ENCODE measurements at regions of chr22 and their contacts with region 1.

Region 1: DNA sequence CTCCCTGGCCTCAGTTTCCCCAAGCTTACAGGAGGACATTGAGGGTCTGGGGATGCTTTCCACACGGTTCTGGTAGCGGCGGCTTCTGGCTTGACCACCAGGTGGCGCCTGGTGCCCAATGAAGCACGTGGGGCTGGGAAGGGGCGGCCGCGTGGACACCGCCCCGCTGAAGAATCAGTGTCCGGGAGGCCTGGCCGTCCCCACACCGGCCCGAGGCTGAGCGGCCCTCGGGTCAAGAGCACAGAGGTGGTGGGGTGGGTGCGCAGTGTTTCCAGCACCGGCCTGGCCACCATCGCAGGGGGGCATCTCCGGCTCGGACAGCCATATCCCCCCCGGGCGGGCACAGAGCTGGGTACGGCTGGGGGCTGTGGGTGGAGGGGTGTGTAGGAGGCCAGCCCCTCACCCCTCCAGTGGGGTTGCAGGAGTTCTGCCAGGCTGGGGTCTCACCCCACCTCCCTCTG is 27.8 kb upstream of the PPARA start:
- DNase-seq: peak; percentile 71 to 83
- ATAC-seq: peak; percentile 58 to 79 (median 70)
- H3K4me3 ChIP-seq: peak overlapping the region in 1 of 10 donors; percentile 16
- H3K27ac ChIP-seq: no peak overlapping the region
- H3K4me1 ChIP-seq: peaks cover 0 to 23% (median 5%) of the 10 kb centered on the region in 9 donors
- H3K27me3 ChIP-seq: no peaks in the 10 kb centered on the region
- CTCF ChIP-seq: peak; percentile 93 to 99 (median 96)

Region 2: DNA sequence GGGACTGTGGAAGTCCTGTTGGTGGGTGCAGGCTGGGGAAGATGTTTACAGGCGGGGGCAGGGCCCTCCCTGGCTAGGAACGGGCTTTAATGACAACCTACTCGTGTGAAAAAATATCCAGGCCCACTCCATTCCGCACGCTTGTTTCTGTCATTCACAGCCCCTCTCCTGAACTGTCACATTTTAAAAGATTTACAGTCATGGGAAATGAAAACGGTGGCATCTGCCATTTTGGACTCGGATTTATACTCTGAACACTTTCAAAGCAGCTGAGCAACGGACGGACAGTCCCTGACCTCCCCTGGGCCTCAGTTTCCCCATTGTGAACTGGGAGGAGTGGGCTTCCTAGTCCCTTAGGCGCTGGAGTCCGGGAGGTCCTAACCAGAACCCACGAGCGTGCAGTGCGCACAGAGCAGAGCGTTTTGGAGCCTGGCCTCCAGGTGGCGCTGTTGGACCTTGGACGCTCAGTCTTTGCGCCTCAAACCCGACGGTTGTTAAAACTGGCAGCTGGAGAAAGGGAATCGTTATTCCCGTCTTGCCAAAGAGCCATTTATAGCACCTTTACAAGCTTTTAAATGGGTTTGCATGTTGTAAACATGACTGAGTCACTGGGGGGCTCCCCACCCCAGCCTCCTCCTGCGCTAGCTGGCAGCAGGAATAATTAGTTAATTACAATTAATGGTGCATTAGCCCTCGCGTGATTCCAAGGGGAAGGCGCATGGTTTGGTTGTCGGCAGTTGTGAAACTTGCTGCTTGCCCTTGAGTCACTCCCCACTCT is 544.6 kb before region 1 on chr22:
- intact Hi-C with region 1: loop called in 1 of 10 experiments (anchors 10 kb)
- DNase-seq: peak; percentile 71 to 86
- ATAC-seq: peak; percentile 69 to 87 (median 80)
- H3K4me3 ChIP-seq: no peak overlapping the region
- H3K27ac ChIP-seq: no peak overlapping the region
- H3K4me1 ChIP-seq: peaks cover 0 to 6% (median 0%) of the 10 kb centered on the region in 9 donors
- H3K27me3 ChIP-seq: peaks cover 0 to 42% (median 26%) of the 10 kb centered on the region in 7 donors
- CTCF ChIP-seq: peak; percentile 79 to 97 (median 92)

Region 3: GRCh38 chr22:46250035-46250782 is 127.7 kb after region 1 on chr22 and contains the start of gene CDPF1:
- intact Hi-C with region 1: loop called in 1 of 10 experiments (anchors 10 kb)
- DNase-seq: peak; percentile 93 to 94
- ATAC-seq: peak; percentile 92 to 97 (median 94)
- H3K4me3 ChIP-seq: peak within 1 kb of the TSS; percentile 48 to 93 (median 81)
- H3K27ac ChIP-seq: peak within 1 kb of the TSS; percentile 84 to 96 (median 94)
- H3K4me1 ChIP-seq: peaks cover 13 to 58% (median 43%) of the 10 kb centered on the region in 9 donors
- H3K27me3 ChIP-seq: no peaks in the 10 kb centered on the region
- CTCF ChIP-seq: no peak
- total RNA-seq, gene CDPF1: 6.3 to 10.4 (median 7.5) TPM

Region 4: DNA sequence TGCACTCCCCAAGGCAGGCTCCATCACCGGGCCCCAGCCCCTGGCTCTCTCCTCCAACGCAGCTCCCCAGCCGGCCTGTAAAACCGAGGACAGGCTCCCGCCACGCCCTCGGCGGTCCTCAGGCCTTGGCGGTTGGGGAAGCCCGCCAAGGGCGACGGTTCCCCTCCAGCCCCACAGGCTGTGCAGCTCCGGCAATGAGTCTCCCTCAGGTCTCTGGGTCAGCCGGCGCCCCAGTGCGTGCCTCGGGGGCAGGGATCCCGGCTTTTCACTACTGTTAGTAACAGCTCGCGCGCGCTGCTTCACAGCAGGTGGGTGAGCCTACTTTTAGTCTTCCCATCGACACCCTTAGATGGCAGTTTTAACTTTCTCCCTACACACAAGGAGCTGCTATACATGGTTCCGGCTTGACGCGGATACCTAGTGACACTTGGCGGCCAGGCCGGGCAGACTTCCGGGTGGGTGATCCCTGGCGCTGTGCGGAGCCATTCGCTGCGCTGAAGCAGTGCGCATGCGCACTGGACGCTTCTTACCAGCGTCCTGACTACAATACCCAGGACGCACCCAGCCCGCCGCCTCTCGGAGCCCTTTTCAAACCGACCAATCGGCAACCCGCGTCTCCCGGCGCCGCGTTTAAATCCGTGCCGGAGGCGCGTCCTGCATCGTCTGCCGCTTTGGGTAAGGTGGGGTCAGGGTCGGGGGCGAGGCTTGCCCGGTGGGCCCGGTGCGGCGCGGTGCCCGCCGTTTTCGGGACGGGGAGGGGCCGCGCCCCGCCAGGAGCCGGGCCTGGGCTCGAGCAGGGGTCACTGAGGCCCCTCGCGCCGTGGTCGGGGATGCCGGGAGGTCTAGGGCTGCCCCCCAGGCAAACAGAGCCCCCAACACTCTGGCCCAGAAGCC is 174.0 kb after region 1 on chr22 and contains the start of gene GTSE1:
- intact Hi-C with region 1: loop called in 1 of 10 experiments (anchors 5 kb)
- DNase-seq: peak; percentile 97 to 99
- ATAC-seq: peak; percentile 97 to 99 (median 98)
- H3K4me3 ChIP-seq: peak within 1 kb of the TSS; percentile 43 to 76 (median 63)
- H3K27ac ChIP-seq: peak within 1 kb of the TSS; percentile 89 to 97 (median 91)
- H3K4me1 ChIP-seq: peaks cover 11 to 45% (median 18%) of the 10 kb centered on the region in 9 donors
- H3K27me3 ChIP-seq: no peaks in the 10 kb centered on the region
- CTCF ChIP-seq: peak in 6 of 9 donors; percentile 26 to 62 (median 49)
- total RNA-seq, gene GTSE1: 0.17 to 4.7 (median 0.37) TPM

Region 5: DNA sequence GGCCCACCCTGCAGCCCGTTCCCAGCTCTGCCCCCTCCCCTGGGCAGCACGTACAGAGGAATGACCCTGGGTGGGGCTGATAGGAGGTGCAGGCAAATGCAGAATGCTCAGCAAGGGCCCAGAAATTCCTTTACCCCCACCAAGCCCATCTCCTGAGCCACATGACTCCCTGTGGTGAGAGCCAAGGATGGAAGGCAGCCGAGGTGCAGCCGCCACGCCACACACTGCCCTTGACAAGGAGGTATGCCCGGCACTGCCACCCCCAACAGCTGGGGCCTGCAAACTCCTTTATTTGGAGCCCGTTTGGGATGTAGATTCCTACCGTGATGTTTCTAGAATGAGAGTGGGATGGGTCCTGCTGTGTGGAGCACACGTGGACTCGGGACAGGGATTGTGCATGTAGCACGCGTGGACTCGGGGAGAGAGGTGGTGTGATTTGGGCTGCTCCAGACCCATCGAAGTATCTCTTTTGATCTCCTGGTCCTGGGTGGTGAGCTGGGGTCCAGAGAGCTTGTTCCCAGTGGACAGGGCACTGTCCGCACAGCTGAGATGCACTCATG is 187.1 kb after region 1 on chr22:
- intact Hi-C with region 1: loop called in 9 of 10 experiments (anchors 1 to 2 kb)
- DNase-seq: peak in 1 of 2 donors; percentile 36
- ATAC-seq: peak; percentile 67 to 89 (median 77)
- H3K4me3 ChIP-seq: no peak overlapping the region
- H3K27ac ChIP-seq: peak overlapping the region in 2 of 10 donors; percentile 5 to 28
- H3K4me1 ChIP-seq: peaks cover 0 to 10% (median 0%) of the 10 kb centered on the region in 9 donors
- H3K27me3 ChIP-seq: no peaks in the 10 kb centered on the region
- CTCF ChIP-seq: no peak

Region 6: GRCh38 chr22:46317646-46318045 is 195.1 kb after region 1 on chr22:
- intact Hi-C with region 1: loop called (anchors 1 to 2 kb)
- DNase-seq: no peak
- ATAC-seq: no peak
- H3K4me3 ChIP-seq: no peak overlapping the region
- H3K27ac ChIP-seq: no peak overlapping the region
- H3K4me1 ChIP-seq: peaks cover 0 to 4% (median 0%) of the 10 kb centered on the region in 9 donors
- H3K27me3 ChIP-seq: no peaks in the 10 kb centered on the region
- CTCF ChIP-seq: no peak

Region 7: DNA sequence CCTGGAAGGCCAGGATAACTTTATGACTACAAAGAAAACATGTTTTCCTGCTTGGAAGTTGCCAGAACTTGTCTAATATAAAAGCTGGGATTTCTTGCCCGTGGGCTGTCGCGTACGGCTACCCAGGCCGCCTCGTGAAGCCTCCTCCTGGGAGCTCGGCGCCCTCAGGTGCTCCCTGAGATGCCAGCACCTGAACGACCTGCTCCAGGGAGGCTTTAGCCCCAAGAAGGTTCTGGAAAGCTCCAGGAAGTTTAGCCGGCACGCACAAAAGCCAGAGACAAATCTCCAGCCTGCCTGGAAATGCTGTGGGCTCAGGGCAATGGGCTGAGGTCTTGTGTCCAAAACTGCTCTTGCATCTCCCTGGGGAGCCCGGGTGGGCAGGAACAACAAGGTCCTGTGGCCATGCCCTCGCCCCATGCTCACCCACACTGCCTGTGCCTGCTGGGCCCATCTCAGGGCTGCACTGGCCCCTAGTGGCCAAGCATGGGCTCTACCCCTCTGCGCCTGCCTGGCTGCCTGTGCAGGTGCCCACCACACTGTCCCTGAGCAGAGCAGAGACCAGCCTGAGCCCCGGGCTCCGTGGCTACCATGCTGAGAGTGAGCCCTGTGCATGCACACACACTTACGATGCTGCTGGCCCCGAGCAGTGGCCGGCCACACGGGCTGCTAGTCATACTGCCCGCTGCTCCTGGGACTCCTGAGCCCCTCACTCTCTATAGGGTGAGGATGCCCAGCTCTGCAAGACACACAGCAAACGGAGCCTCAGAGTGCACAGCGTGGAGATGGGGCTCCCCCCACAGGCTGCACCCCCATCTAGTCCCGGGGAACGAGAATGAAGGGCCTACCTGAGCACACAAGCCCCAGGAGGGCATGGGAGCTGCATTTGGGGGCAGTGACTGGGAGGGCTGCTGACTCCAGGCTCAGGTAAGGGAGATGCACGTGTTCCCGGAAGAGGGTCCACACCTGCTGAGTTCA is 419.8 kb after region 1 on chr22:
- intact Hi-C with region 1: loop called in 6 of 10 experiments (anchors 5 to 10 kb)
- DNase-seq: peak; percentile 62 to 79
- ATAC-seq: peak; percentile 66 to 83 (median 76)
- H3K4me3 ChIP-seq: no peak overlapping the region
- H3K27ac ChIP-seq: peak overlapping the region in 1 of 10 donors; percentile 15
- H3K4me1 ChIP-seq: peaks cover 0 to 46% (median 31%) of the 10 kb centered on the region in 9 donors
- H3K27me3 ChIP-seq: peaks cover 0 to 48% (median 30%) of the 10 kb centered on the region in 7 donors
- CTCF ChIP-seq: peak; percentile 86 to 97 (median 90)